Calu3 (cell line): ENCODE measurements at regions of chr4 and their contacts with region 1.

Region 1: GRCh38 chr4:165131247-165131832 is 18.7 kb upstream of the TMEM192 start:
- DNase-seq: peak; percentile 68
- H3K4me3 Mint-ChIP-seq: no peak overlapping the region
- H3K27ac Mint-ChIP-seq: no peak overlapping the region
- H3K4me1 Mint-ChIP-seq: no peaks in the 10 kb centered on the region
- H3K27me3 Mint-ChIP-seq: peaks cover 11% of the 10 kb centered on the region
- CTCF ChIP-seq: peak; percentile 39

Region 2: DNA sequence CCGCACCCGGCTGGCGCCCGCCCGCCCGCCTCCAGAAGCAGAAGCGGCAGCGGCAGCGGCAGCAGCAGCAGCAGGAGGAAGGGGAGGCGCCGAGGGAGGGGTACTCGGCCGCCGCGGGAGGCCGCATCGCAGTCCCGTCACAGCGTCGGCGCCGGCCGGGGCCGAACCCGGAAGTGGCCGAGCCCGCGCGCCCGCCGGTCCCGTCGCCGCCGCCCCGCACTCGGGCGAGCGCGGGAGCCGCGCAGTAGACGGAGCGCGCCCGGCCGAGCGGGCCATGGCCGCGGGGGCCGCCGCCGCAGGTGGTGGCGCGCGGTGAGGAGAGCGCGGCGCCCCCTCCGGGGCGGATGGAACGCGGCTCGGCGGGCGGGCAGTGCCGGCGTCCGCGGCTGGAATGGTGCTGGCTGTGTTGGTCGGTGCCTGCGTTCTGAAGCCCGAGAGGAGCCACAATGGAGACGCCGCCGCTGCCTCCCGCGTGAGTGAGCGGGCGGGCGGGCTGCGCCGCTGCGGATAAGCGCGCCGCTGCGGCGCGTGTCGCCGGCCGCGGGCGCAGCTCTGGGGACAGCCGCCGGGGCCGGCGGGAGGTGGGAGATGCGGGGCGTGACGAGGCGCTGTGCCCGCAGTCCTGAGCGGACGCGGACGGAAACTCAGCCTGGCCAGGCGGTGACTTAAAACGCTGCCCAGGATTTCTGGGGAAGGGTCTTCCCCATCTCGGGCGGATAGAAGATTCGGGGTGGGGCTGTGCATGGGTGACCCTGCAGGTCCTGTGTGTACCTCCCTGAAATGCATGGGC is 76.3 kb after region 1 on chr4 and contains the start of gene KLHL2:
- CTCF ChIA-PET with region 1: no interaction called
- intact Hi-C with region 1: loop called (anchors 5 kb)
- DNase-seq: peak; percentile 72
- H3K4me3 Mint-ChIP-seq: peak within 1 kb of the TSS; percentile 58
- H3K27ac Mint-ChIP-seq: peak within 1 kb of the TSS; percentile 9
- H3K4me1 Mint-ChIP-seq: peaks cover 39% of the 10 kb centered on the region
- H3K27me3 Mint-ChIP-seq: no peaks in the 10 kb centered on the region
- CTCF ChIP-seq: no peak
- total RNA-seq, gene KLHL2: 12.9 and 13.8 TPM in 2 replicates

Region 3: GRCh38 chr4:165327211-165328100 is 196.1 kb after region 1 on chr4 and contains the start of gene MSMO1:
- CTCF ChIA-PET with region 1: interaction called, 6 read pairs
- intact Hi-C with region 1: loop called (anchors 5 kb)
- DNase-seq: peak; percentile 95
- H3K4me3 Mint-ChIP-seq: no peak within 1 kb of the TSS
- H3K27ac Mint-ChIP-seq: no peak within 1 kb of the TSS
- H3K4me1 Mint-ChIP-seq: peaks cover 22% of the 10 kb centered on the region
- H3K27me3 Mint-ChIP-seq: no peaks in the 10 kb centered on the region
- CTCF ChIP-seq: no peak
- total RNA-seq, gene MSMO1: 93.6 and 111 TPM in 2 replicates

Region 4: DNA sequence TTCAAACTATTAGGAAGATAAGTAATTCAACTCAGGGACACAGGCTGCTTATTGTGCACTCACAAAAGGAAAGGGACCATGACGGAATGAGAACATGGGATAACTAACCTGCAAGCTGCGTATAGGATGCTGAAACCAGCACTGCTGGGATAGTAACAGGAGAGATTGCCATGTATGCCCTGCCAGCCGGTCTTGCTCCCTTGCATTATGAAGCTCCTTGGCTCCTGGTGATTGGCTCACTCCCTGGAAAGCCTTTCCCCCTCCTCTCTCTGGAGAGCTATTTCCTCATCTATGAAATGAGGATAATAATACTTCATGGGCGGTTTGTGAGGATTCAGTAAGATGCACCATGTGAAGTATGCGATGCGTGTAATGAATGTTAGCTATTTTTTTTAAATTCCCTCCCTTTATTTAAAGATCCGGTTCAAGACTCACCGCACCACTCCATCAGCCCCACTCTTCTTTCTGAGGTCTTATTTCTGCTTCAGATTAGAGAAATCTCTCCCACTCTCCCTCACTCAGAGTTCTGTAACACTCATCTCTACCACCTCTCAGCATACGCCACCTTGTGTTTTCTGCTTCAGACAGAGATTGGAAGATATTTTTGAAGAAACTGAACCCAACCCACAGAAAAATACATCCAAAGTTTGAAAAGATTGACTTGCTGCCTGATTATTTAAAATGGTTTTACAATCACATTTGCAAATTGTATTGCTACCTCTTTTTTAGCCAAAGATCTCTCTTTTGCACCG is 214.5 kb after region 1 on chr4:
- CTCF ChIA-PET with region 1: no interaction called
- intact Hi-C with region 1: loop called (anchors 2 kb)
- DNase-seq: no peak
- H3K4me3 Mint-ChIP-seq: no peak overlapping the region
- H3K27ac Mint-ChIP-seq: no peak overlapping the region
- H3K4me1 Mint-ChIP-seq: no peaks in the 10 kb centered on the region
- H3K27me3 Mint-ChIP-seq: no peaks in the 10 kb centered on the region
- CTCF ChIP-seq: no peak

Region 5: DNA sequence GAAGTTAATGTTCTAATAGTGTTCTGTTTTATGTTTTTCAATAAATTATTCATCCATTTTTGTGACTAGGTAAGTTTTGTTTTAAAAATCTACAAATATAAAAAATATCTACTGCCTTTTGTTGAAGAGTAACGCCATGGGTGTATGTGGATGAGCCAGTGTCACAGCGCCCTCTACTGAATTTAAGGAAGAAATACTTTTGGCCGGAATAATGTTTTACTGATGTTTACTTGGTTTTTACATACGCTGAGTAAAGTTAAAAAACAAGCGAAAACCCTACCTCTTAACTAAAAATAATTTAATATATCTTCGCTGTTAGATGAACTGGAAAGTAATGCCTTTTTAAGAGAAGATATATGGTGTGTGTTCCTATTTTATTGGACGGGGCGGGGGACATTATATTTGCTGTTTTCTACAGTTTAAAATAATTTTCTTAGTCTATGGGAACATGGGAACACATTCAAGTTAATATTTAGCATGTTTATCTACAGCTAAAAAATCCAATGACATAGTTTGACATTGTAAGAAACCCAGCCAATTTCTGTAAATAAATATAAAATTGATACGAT is 333.6 kb after region 1 on chr4:
- CTCF ChIA-PET with region 1: interaction called, 3 read pairs
- intact Hi-C with region 1: loop called (anchors 1 kb)
- DNase-seq: no peak
- H3K4me3 Mint-ChIP-seq: no peak overlapping the region
- H3K27ac Mint-ChIP-seq: no peak overlapping the region
- H3K4me1 Mint-ChIP-seq: no peaks in the 10 kb centered on the region
- H3K27me3 Mint-ChIP-seq: no peaks in the 10 kb centered on the region
- CTCF ChIP-seq: peak; percentile 17